ENCODE measurements at regions of chr14 and their contacts with region 1.

Region 1: DNA sequence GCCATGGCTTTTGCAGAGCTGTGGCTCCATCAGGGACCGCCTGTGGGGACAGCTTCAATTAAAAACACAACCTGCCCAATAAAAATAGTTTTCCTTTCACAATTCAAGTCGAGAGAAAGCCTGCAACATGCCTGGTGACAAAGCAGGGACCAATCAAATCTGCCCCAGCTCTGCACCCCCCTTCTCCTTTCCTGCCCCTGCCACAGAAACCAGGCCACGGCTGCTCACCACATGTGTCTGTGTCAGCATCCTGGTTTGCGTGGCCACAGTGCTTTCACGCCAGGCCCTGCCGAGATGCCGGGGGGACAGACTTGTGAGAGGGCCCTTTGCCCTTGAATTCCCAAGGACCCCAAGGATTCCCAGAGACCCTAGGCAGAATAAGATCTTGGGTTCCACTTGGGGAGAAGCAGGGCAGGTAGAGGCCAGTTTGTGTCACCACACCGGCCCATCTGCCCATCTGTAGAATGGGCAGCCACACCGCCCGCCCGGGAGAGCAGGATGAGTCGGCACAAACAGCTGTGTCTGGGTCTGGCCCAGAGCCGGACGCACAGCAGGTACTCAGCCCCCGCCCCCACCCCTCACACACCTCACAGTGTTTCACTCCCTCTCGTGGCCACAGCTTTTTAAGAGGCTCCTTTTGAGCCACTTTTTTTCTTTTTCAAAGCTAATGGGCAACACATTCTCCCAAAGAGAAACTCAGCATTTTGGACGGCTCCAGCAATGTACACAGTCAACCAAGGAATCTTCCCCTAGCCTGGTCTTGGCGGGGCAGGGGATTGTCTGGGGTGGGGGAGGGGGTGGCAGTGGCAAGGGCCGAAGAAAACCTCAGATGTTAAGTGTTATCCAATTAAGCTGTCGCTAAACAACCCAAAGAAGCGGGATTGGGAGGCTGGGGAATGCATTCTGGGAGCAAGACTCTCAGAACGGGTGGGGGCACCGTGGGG is 41.5 kb downstream of the BCL11B start:
- DNase-seq: peak; percentile 93
- H3K4me3 Mint-ChIP-seq: peak overlapping the region; percentile 73
- H3K27ac Mint-ChIP-seq: peak overlapping the region; percentile 99
- H3K4me1 Mint-ChIP-seq: peaks cover 94% of the 10 kb centered on the region
- H3K27me3 Mint-ChIP-seq: no peaks in the 10 kb centered on the region

Region 2: GRCh38 chr14:98742001-98742400 is 488.5 kb before region 1 on chr14:
- CTCF ChIA-PET with region 1: no interaction called
- POLR2A ChIA-PET with region 1: no interaction called
- DNase-seq: no peak
- H3K4me3 Mint-ChIP-seq: no peak overlapping the region
- H3K27ac Mint-ChIP-seq: no peak overlapping the region
- H3K4me1 Mint-ChIP-seq: no peaks in the 10 kb centered on the region
- H3K27me3 Mint-ChIP-seq: no peaks in the 10 kb centered on the region

Region 3: GRCh38 chr14:99064226-99064954 is 166.1 kb before region 1 on chr14:
- CTCF ChIA-PET with region 1: no interaction called
- POLR2A ChIA-PET with region 1: no interaction called
- DNase-seq: no peak
- H3K4me3 Mint-ChIP-seq: no peak overlapping the region
- H3K27ac Mint-ChIP-seq: no peak overlapping the region
- H3K4me1 Mint-ChIP-seq: no peaks in the 10 kb centered on the region
- H3K27me3 Mint-ChIP-seq: no peaks in the 10 kb centered on the region

Region 4: DNA sequence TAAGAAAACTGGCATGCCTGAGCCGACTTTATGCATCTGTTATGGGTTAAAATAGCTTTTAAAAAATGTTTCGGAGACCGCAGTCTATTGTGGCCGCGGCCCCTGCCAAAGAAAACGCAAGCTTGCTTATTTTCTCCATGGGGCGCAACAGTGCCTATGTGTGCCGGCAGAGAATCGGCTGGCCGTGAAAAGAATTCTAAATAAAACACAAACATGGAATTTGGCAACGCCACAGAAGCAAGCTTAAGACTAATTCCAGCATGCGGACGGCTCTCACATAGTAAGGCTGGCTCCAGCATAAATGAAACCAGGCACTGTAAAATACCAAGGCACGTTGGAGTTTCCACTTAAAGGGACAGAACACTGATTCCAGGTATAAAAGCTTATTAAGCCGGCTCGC is 15.2 kb before region 1 on chr14:
- CTCF ChIA-PET with region 1: interaction called, 19 read pairs
- POLR2A ChIA-PET with region 1: interaction called, 573 read pairs
- DNase-seq: no peak
- H3K4me3 Mint-ChIP-seq: peak overlapping the region; percentile 62
- H3K27ac Mint-ChIP-seq: peak overlapping the region; percentile 63
- H3K4me1 Mint-ChIP-seq: peaks cover 93% of the 10 kb centered on the region
- H3K27me3 Mint-ChIP-seq: no peaks in the 10 kb centered on the region

Region 5: GRCh38 chr14:99245564-99246511 is 15.4 kb after region 1 on chr14:
- CTCF ChIA-PET with region 1: interaction called, 40 read pairs
- POLR2A ChIA-PET with region 1: interaction called, 573 read pairs
- DNase-seq: no peak
- H3K4me3 Mint-ChIP-seq: peak overlapping the region; percentile 79
- H3K27ac Mint-ChIP-seq: peak overlapping the region; percentile 99
- H3K4me1 Mint-ChIP-seq: peaks cover 79% of the 10 kb centered on the region
- H3K27me3 Mint-ChIP-seq: no peaks in the 10 kb centered on the region

Region 6: DNA sequence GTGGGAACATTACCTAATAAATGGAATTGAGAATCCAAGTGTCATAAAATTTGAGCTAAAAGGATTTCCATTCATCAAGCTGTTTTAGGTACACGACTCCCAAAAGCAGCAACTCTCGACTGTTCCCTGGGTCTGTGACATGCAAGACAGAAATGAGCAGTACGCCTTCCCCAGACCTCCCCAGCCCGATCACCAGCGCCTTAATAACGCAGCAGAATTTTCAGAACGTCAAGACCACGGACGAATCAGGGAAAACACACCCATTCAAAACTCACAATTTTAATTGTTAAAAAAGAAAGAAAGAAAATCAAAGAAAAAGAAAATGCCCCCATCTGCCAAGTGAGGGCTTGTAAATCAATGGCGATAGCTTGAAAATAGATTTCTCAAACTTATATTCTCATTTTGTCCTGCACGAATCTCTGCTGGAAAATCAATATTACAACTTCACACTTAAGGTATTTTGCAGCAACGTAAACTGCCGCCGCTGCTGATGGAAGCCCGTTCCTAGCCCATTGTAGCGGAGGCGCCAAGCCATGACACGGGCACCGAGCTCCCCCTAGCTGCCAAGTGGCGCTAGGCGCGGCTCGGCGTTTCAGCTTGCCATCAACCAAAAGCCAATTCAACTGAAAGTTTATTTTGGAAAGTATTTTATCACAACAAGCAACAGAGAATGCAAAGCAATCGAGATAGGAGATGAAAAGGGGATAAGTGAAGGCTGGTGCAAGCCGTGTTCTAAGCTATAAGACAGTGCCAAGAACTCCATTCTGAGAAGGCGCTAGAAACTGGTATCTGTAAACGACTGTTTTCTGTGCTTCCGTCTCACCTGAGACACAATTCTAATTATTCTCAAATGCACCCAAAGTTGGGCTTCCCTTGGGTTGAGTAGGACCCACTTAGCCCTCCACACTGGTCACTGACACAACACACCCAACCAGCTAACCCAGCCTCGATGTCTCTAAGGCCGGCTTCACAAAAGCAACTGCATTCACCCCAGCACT is 36.0 kb after region 1 on chr14:
- CTCF ChIA-PET with region 1: interaction called, 214 read pairs
- POLR2A ChIA-PET with region 1: interaction called, 1,689 read pairs
- DNase-seq: peak; percentile 92
- H3K4me3 Mint-ChIP-seq: peak overlapping the region; percentile 99
- H3K27ac Mint-ChIP-seq: peak overlapping the region; percentile 100
- H3K4me1 Mint-ChIP-seq: peaks cover 59% of the 10 kb centered on the region
- H3K27me3 Mint-ChIP-seq: no peaks in the 10 kb centered on the region

Region 7: GRCh38 chr14:99271951-99272631 is 41.6 kb after region 1 on chr14 and contains the start of gene BCL11B:
- CTCF ChIA-PET with region 1: interaction called, 214 read pairs
- POLR2A ChIA-PET with region 1: interaction called, 1,689 read pairs
- DNase-seq: peak; percentile 93
- H3K4me3 Mint-ChIP-seq: peak within 1 kb of the TSS; percentile 89
- H3K27ac Mint-ChIP-seq: peak within 1 kb of the TSS; percentile 95
- H3K4me1 Mint-ChIP-seq: peaks cover 30% of the 10 kb centered on the region
- H3K27me3 Mint-ChIP-seq: peaks cover 20% of the 10 kb centered on the region
- total RNA-seq, gene BCL11B: 81.7 to 82.0 TPM

Measured in activated CD4-positive, alpha-beta memory T cell treated with anti-CD3 and anti-CD28 coated beads, Interleukin-2, amount 10 ng/mL, durations not matched to agents 7 days and 5 days (primary cell).